Endothelial cell of umbilical vein (primary cell): ENCODE measurements at regions of chr6 and their contacts with region 1.

Region 1: GRCh38 chr6:111478749-111479148 is 4.3 kb downstream of the REV3L start:
- DNase-seq: peak; percentile 70
- H3K4me3 ChIP-seq: no peak overlapping the region
- H3K27ac ChIP-seq: peak overlapping the region; percentile 10
- H3K4me1 ChIP-seq: peaks cover 29% of the 10 kb centered on the region
- H3K27me3 ChIP-seq: no peaks in the 10 kb centered on the region
- CTCF ChIP-seq: peak in 1 of 2 donors; percentile 24
- POLR2A ChIP-seq: no peak

Region 2: DNA sequence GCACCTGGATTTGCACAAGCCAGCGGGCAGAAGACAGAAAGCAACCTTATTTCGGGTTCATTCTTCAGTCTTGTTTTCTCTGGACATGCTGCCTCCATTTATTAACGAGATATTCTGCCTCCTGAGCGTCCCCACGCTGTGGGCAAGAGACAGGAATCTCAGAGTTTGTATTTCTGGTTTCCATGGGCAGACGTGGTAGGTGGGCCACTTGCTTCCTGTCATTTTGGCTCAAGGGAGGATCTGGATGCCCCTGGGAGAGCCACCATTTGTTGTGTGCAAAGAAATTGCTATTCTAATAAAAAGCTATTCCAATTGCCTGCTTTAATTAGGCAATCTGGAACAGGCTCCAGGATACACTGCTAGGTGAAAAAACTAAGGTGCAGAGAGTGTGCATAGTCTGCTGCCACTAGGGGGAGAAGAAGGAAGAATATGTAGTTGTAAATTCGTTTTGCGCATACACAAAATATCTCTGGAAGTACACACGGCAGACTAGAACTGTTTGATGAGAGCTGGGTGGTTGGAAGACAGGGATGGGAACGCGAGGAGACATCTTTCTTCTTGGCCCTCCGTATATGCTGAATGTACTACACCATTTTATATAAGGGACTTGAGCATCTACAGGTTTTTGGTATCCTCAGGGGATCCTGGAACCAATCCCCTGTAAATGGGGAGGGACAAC is 421.5 kb before region 1 on chr6:
- CTCF ChIA-PET with region 1: interaction called, 12 read pairs
- POLR2A ChIA-PET with region 1: no interaction called
- dilution Hi-C with region 1: no loop called
- intact Hi-C with region 1: no loop called
- DNase-seq: peak; percentile 49
- H3K4me3 ChIP-seq: no peak overlapping the region
- H3K27ac ChIP-seq: no peak overlapping the region
- H3K4me1 ChIP-seq: no peaks in the 10 kb centered on the region
- H3K27me3 ChIP-seq: peaks cover 7 to 9% of the 10 kb centered on the region in 2 experiments
- CTCF ChIP-seq: peak; percentile 56 to 64
- POLR2A ChIP-seq: no peak

Region 3: DNA sequence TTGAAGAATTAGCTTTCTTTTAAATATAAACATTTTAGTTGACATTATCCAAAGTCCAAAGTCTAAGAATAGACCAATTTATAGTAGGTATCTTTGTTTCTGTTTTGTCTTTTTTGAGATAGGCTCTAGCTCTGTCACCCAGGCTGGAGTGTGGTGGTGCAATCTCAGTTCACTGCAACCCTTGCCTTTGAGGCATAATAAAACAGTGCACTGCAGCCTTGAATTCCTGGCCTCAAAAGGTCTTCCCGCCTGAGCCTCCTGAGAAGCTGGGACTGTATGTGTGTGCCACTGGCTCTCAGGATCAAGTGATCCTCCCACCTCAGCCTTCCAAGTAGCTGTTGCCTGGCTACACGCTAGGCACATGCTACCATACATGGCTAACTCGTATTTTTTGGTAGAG is 131.2 kb before region 1 on chr6:
- CTCF ChIA-PET with region 1: interaction called, 13 read pairs
- POLR2A ChIA-PET with region 1: no interaction called
- dilution Hi-C with region 1: no loop called
- intact Hi-C with region 1: no loop called
- DNase-seq: no peak
- H3K4me3 ChIP-seq: no peak overlapping the region
- H3K27ac ChIP-seq: no peak overlapping the region
- H3K4me1 ChIP-seq: no peaks in the 10 kb centered on the region
- H3K27me3 ChIP-seq: no peaks in the 10 kb centered on the region
- CTCF ChIP-seq: no peak
- POLR2A ChIP-seq: no peak

Region 4: GRCh38 chr6:111381123-111381522 is 97.6 kb before region 1 on chr6:
- CTCF ChIA-PET with region 1: interaction called, 11 read pairs
- POLR2A ChIA-PET with region 1: interaction called, 3 read pairs
- dilution Hi-C with region 1: no loop called
- intact Hi-C with region 1: no loop called
- DNase-seq: peak; percentile 15
- H3K4me3 ChIP-seq: no peak overlapping the region
- H3K27ac ChIP-seq: no peak overlapping the region
- H3K4me1 ChIP-seq: no peaks in the 10 kb centered on the region
- H3K27me3 ChIP-seq: no peaks in the 10 kb centered on the region
- CTCF ChIP-seq: no peak
- POLR2A ChIP-seq: no peak

Region 5: GRCh38 chr6:111462770-111463391 is 15.9 kb before region 1 on chr6:
- CTCF ChIA-PET with region 1: interaction called, 26 read pairs
- POLR2A ChIA-PET with region 1: no interaction called
- dilution Hi-C with region 1: no loop called
- intact Hi-C with region 1: no loop called
- DNase-seq: peak; percentile 90
- H3K4me3 ChIP-seq: no peak overlapping the region
- H3K27ac ChIP-seq: peak overlapping the region; percentile 3
- H3K4me1 ChIP-seq: peaks cover 29% of the 10 kb centered on the region
- H3K27me3 ChIP-seq: no peaks in the 10 kb centered on the region
- CTCF ChIP-seq: no peak
- POLR2A ChIP-seq: no peak

Region 6: GRCh38 chr6:111642463-111643158 is 163.9 kb after region 1 on chr6:
- CTCF ChIA-PET with region 1: interaction called, 19 read pairs
- POLR2A ChIA-PET with region 1: no interaction called
- dilution Hi-C with region 1: no loop called
- intact Hi-C with region 1: loop called (anchors 1 kb)
- DNase-seq: peak; percentile 79
- H3K4me3 ChIP-seq: no peak overlapping the region
- H3K27ac ChIP-seq: no peak overlapping the region
- H3K4me1 ChIP-seq: no peaks in the 10 kb centered on the region
- H3K27me3 ChIP-seq: no peaks in the 10 kb centered on the region
- CTCF ChIP-seq: peak; percentile 63 to 67
- POLR2A ChIP-seq: no peak

Region 7: GRCh38 chr6:111888928-111889695 is 410.4 kb after region 1 on chr6:
- CTCF ChIA-PET with region 1: no interaction called
- POLR2A ChIA-PET with region 1: no interaction called
- dilution Hi-C with region 1: no loop called
- intact Hi-C with region 1: no loop called
- DNase-seq: peak; percentile 71
- H3K4me3 ChIP-seq: peak overlapping the region in 1 of 3 experiments; percentile 31
- H3K27ac ChIP-seq: no peak overlapping the region
- H3K4me1 ChIP-seq: peaks cover 24% of the 10 kb centered on the region
- H3K27me3 ChIP-seq: no peaks in the 10 kb centered on the region
- CTCF ChIP-seq: no peak
- POLR2A ChIP-seq: no peak